Common myeloid progenitor, CD34-positive (primary cell): ENCODE measurements at regions of chr12 and their contacts with region 1.

Region 1: GRCh38 chr12:71636704-71637115 is 26.9 kb downstream of the ZFC3H1 start:
- DNase-seq: peak; percentile 77 to 90 (median 86)
- H3K4me3 ChIP-seq: no peak overlapping the region
- H3K27ac ChIP-seq: no peak overlapping the region
- H3K4me1 ChIP-seq: no peaks in the 10 kb centered on the region
- H3K27me3 ChIP-seq: no peaks in the 10 kb centered on the region

Region 2: GRCh38 chr12:71415336-71416231 is 221.1 kb before region 1 on chr12:
- CTCF ChIA-PET with region 1: interaction called, 19 read pairs
- POLR2A ChIA-PET with region 1: no interaction called
- DNase-seq: peak; percentile 50 to 69 (median 60)
- H3K4me3 ChIP-seq: no peak overlapping the region
- H3K27ac ChIP-seq: no peak overlapping the region
- H3K4me1 ChIP-seq: no peaks in the 10 kb centered on the region
- H3K27me3 ChIP-seq: no peaks in the 10 kb centered on the region

Region 3: DNA sequence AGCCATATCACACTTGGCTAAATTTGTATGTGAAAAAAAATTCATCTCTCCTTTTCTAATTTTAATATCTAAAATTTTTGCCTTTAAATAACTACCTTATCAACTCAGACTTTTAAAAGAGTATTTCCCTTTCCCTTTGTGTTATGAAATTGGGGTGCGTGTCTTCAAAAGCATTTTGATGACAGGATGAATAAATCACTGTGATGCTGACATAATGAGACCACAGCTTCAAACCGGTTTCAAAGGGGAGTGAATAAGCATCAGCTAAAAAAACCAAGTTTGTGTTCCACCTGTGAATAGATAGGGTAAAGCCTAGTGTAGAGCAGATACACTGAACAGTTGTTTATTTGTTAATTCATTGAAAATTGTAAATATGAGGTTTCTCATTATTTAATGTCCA is 112.1 kb before region 1 on chr12:
- CTCF ChIA-PET with region 1: no interaction called
- POLR2A ChIA-PET with region 1: no interaction called
- DNase-seq: peak; percentile 17 to 81 (median 76)
- H3K4me3 ChIP-seq: peak overlapping the region in 1 of 7 experiments; percentile 2
- H3K27ac ChIP-seq: no peak overlapping the region
- H3K4me1 ChIP-seq: peaks cover 0 to 11% (median 3%) of the 10 kb centered on the region in 4 experiments
- H3K27me3 ChIP-seq: no peaks in the 10 kb centered on the region

Region 4: GRCh38 chr12:71587012-71587411 is 49.7 kb before region 1 on chr12:
- CTCF ChIA-PET with region 1: no interaction called
- POLR2A ChIA-PET with region 1: no interaction called
- DNase-seq: no peak
- H3K4me3 ChIP-seq: no peak overlapping the region
- H3K27ac ChIP-seq: no peak overlapping the region
- H3K4me1 ChIP-seq: no peaks in the 10 kb centered on the region
- H3K27me3 ChIP-seq: no peaks in the 10 kb centered on the region

Region 5: GRCh38 chr12:71763677-71764379 is 127.1 kb after region 1 on chr12:
- CTCF ChIA-PET with region 1: no interaction called
- POLR2A ChIA-PET with region 1: no interaction called
- DNase-seq: no peak
- H3K4me3 ChIP-seq: no peak overlapping the region
- H3K27ac ChIP-seq: no peak overlapping the region
- H3K4me1 ChIP-seq: no peaks in the 10 kb centered on the region
- H3K27me3 ChIP-seq: no peaks in the 10 kb centered on the region